H1 (cell line): ENCODE measurements at regions of chr20 and their contacts with region 1.

Region 1: GRCh38 chr20:22586645-22587310 is 2.4 kb upstream of the FOXA2 start:
- DNase-seq: peak in 1 of 2 experiments; percentile 90
- H3K4me3 ChIP-seq: peak overlapping the region in 3 of 4 experiments; percentile 2 to 52 (median 19); a peak in 3 of 8 replicates
- H3K27ac ChIP-seq: no peak overlapping the region
- H3K4me1 ChIP-seq: peaks cover 9 to 21% (median 14%) of the 10 kb centered on the region in 4 experiments
- H3K27me3 ChIP-seq: peaks cover 71 to 89% (median 86%) of the 10 kb centered on the region in 4 experiments
- CTCF ChIP-seq: peak; percentile 76 to 83 (median 83)
- EP300 ChIP-seq: no peak
- POLR2A ChIP-seq: no peak
- RAD21 ChIP-seq: peak; percentile 71 to 78

Region 2: DNA sequence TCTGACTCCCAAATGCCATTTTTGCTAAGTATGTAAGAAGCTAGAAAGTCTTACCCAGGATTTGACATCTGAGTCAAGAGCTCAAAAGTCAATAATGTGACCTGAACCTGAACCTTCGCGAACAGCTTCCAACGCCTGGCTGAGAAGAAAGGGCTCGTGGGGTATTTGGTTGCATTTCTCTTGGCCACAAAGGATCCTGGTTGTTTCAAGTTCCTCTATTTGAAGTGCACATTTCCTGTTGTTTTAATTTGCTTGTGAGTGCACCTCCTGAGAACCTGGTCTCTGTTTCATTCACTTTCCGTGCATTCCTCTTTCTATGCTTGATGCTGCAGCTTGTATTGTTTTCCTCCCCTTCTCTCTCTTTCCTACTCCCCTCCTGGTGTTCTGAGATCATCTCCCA is 214.9 kb before region 1 on chr20:
- CTCF ChIA-PET with region 1: interaction called, 10 read pairs
- POLR2A ChIA-PET with region 1: no interaction called
- DNase-seq: no peak
- H3K4me3 ChIP-seq: no peak overlapping the region
- H3K27ac ChIP-seq: no peak overlapping the region
- H3K4me1 ChIP-seq: peaks cover 0 to 8% (median 1%) of the 10 kb centered on the region in 4 experiments; a peak in 2 of 7 replicates
- H3K27me3 ChIP-seq: peaks cover 0 to 10% (median 2%) of the 10 kb centered on the region in 4 experiments; a peak in 5 of 7 replicates
- CTCF ChIP-seq: no peak
- EP300 ChIP-seq: no peak
- POLR2A ChIP-seq: no peak
- RAD21 ChIP-seq: no peak

Region 3: GRCh38 chr20:22490287-22491193 is 96.2 kb before region 1 on chr20:
- CTCF ChIA-PET with region 1: interaction called, 19 read pairs
- POLR2A ChIA-PET with region 1: no interaction called
- DNase-seq: peak in 1 of 2 experiments; percentile 58
- H3K4me3 ChIP-seq: no peak overlapping the region
- H3K27ac ChIP-seq: no peak overlapping the region
- H3K4me1 ChIP-seq: peaks cover 1 to 6% (median 5%) of the 10 kb centered on the region in 4 experiments; a peak in 4 of 7 replicates
- H3K27me3 ChIP-seq: peaks cover 0 to 4% (median 0%) of the 10 kb centered on the region in 4 experiments; a peak in 1 of 7 replicates
- CTCF ChIP-seq: peak in 2 of 3 experiments; percentile 12 to 24; a peak in 2 of 4 replicates
- EP300 ChIP-seq: no peak
- POLR2A ChIP-seq: no peak
- RAD21 ChIP-seq: peak; percentile 15 to 30; a peak in 3 of 4 replicates

Region 4: DNA sequence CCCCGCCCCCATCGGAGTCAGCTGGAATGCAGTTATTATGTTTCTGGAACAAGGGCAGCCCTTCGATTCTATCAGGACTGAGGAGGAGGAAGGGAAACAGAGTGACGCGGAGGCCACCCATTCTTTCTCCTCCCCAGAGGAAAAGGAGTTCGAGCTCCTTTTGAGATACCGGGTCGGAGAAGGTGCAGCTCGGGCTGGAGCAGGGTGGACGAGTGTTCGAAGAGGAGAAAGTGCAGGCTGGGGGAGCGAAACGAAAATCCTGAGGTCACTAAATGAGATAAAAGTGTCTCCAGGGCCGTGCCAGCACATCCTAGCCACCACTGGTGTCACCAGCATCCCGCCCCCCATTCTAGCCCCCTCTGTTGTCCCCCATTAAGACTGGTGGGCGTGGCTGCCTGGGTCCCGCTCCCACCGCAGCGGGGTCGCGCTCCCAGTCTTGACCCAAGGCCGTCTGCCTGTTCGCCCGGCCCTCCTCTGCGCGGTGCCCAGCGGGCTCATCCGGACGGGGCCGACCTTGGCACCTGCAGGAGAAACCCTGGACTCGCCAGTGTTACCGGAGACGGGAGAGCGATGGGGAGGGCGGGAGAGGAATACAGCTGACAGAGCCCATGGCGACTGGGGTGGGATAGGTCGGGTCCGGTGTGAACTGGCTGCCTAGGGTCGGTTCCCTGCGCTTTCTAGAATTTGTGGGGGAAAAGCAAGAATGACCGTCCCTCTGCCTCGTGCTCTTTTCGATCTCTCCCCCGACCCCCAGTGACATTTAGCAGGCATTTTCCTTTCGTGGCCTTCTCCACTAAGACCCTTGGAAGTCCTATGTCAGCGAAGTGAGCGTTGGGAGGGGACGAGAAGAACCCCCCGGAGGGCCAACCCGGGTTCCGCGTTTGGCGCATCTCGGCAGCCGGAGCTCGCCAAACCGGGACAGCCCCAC is 18.6 kb before region 1 on chr20:
- CTCF ChIA-PET with region 1: interaction called, 69 read pairs
- POLR2A ChIA-PET with region 1: interaction called, 7 read pairs
- DNase-seq: peak in 1 of 2 experiments; percentile 66
- H3K4me3 ChIP-seq: peak overlapping the region in 2 of 4 experiments; percentile 20 to 48; a peak in 3 of 8 replicates
- H3K27ac ChIP-seq: no peak overlapping the region
- H3K4me1 ChIP-seq: peaks cover 10 to 47% (median 19%) of the 10 kb centered on the region in 4 experiments
- H3K27me3 ChIP-seq: peaks cover 84 to 100% (median 95%) of the 10 kb centered on the region in 4 experiments
- CTCF ChIP-seq: no peak
- EP300 ChIP-seq: no peak
- POLR2A ChIP-seq: no peak
- RAD21 ChIP-seq: no peak

Region 5: GRCh38 chr20:22617160-22617559 is 30.4 kb after region 1 on chr20:
- CTCF ChIA-PET with region 1: interaction called, 10 read pairs
- POLR2A ChIA-PET with region 1: no interaction called
- DNase-seq: peak in 1 of 2 experiments; percentile 27
- H3K4me3 ChIP-seq: no peak overlapping the region
- H3K27ac ChIP-seq: no peak overlapping the region
- H3K4me1 ChIP-seq: peaks cover 0 to 9% (median 6%) of the 10 kb centered on the region in 4 experiments; a peak in 4 of 7 replicates
- H3K27me3 ChIP-seq: peaks cover 0 to 10% (median 7%) of the 10 kb centered on the region in 4 experiments; a peak in 3 of 7 replicates
- CTCF ChIP-seq: no peak
- EP300 ChIP-seq: no peak
- POLR2A ChIP-seq: no peak
- RAD21 ChIP-seq: no peak

Region 6: DNA sequence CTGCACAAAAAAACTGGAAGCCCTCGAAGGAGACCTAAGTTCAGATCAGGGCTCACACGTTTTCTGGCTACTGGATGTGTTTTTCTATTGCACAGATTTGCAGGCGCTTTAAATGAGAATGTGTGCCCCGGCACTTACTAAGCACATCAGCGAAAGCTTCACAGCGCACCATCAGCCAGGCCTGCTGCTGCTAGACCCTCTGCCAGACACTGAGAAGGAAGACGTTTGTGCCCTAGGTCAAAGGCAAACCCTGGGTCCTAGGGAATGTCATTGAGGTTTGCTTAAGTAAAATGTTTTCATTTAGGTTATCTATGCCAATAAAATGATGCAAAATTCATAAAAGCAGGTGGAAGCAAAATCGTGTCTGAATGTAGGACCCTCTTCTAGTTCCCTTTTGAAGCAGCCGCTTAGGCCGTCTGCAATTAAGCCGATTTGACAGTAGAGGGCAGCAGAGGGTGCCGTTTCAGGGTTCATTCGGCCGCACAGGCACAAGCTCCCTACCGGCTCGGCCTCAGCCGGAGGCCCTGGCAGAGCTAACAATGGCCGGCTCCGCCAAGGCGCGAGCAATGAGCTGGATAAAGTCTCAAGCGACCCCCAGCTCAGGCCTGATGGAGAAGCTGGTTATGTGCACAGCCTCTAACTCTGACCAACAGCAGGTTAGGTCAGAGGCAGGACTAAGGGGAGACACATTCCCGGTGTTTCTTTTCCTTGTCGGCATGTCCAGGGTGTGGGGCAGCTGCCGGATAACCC is 104.8 kb after region 1 on chr20:
- CTCF ChIA-PET with region 1: interaction called, 22 read pairs
- POLR2A ChIA-PET with region 1: no interaction called
- DNase-seq: peak; percentile 58 to 84
- H3K4me3 ChIP-seq: no peak overlapping the region
- H3K27ac ChIP-seq: no peak overlapping the region
- H3K4me1 ChIP-seq: peaks cover 0 to 2% (median 0%) of the 10 kb centered on the region in 4 experiments; a peak in 1 of 7 replicates
- H3K27me3 ChIP-seq: no peaks in the 10 kb centered on the region; a peak in 2 of 7 replicates
- CTCF ChIP-seq: peak; percentile 77 to 90 (median 89)
- EP300 ChIP-seq: no peak
- POLR2A ChIP-seq: no peak
- RAD21 ChIP-seq: peak; percentile 92 to 96

Region 7: DNA sequence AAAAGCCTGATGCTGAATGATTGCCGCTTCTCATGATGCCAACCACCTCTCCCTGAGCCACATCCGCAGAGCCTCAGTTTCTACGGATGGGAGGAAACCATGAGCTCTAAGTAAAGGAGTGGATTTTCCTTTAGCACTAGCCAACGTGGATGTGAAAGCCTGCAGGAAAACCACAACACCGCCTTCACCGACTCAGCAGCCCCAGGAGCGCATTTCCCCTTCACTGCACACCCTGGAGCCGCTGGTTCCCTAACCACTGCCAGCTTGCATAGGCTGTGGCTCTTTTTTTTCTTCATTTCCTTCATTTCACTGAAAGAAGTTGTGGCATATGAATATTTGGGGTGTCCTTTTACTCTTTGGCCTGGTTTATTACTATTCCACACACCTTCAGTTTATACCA is 397.8 kb after region 1 on chr20:
- CTCF ChIA-PET with region 1: no interaction called
- POLR2A ChIA-PET with region 1: no interaction called
- DNase-seq: no peak
- H3K4me3 ChIP-seq: no peak overlapping the region
- H3K27ac ChIP-seq: no peak overlapping the region
- H3K4me1 ChIP-seq: no peaks in the 10 kb centered on the region
- H3K27me3 ChIP-seq: no peaks in the 10 kb centered on the region
- CTCF ChIP-seq: no peak
- EP300 ChIP-seq: no peak
- POLR2A ChIP-seq: no peak
- RAD21 ChIP-seq: no peak